ENCODE measurements at regions of chr12 and their contacts with region 1.

Region 1: GRCh38 chr12:12890815-12891645 is at the start of gene GPRC5A:
- DNase-seq: peak; percentile 58

Region 2: GRCh38 chr12:12786716-12787601 is 104.1 kb before region 1 on chr12:
- CTCF ChIA-PET with region 1: no interaction called
- POLR2A ChIA-PET with region 1: interaction called, 10 read pairs
- DNase-seq: peak; percentile 96

Region 3: GRCh38 chr12:12837025-12837872 is 53.8 kb before region 1 on chr12:
- CTCF ChIA-PET with region 1: interaction called, 7 read pairs
- POLR2A ChIA-PET with region 1: interaction called, 24 read pairs
- DNase-seq: peak; percentile 65

Region 4: GRCh38 chr12:12916135-12916944 is 25.3 kb after region 1 on chr12:
- CTCF ChIA-PET with region 1: interaction called, 14 read pairs
- POLR2A ChIA-PET with region 1: interaction called, 3 read pairs
- DNase-seq: peak; percentile 84

Region 5: DNA sequence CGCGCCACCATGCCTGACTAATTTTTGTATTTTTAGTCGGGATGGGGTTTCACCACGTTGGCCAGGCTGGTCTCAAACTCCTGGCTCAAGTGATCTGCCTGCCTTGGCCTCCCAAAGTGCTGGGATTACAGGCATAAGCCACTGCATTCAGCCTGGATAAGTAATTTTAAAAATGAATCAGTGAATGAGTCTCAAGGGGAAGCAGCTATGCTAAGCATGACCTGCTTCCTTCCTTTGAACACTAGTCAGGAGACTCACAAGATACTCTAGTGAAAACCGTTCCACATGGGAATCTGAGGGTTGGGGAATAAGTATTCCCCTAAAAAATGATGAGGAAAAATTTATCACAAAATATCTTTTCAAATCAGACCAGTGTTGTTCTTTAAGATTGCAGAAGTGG is 142.4 kb after region 1 on chr12:
- CTCF ChIA-PET with region 1: no interaction called
- POLR2A ChIA-PET with region 1: no interaction called
- DNase-seq: no peak